ENCODE measurements at regions of chr6 and their contacts with region 1.

Region 1: DNA sequence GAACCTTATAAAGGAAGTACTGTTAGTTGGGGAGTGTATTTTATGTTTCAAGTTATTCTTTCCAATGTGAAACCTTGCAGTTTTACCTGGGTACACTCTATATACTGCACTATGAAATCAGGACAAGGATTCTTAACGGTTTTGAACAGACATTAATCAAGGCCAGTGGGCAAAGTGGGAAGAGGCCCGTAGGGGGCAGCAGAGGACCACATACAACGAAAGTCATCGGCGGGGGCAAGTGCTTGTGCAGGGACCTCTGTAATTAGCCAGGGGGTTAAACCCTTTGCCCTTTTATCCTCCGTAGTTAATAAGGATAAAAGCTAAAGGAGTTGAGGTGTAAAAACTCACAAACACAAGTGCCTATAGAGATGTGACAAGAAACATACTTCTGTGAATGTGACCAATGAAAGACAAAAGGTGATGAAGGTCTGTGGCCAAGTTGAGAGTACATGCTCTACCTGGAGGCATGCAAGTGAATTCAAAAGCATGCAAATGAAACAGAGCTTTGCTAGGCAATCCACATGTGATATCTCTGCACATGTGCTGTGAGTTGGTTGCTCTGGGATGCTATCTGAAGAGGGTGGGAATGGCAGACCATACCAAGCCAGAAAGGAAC is 392.7 kb upstream of the MAN1A1 start:
- H3K4me3 Mint-ChIP-seq: no peak overlapping the region
- H3K27ac Mint-ChIP-seq: no peak overlapping the region
- H3K4me1 Mint-ChIP-seq: no peaks in the 10 kb centered on the region
- H3K27me3 Mint-ChIP-seq: no peaks in the 10 kb centered on the region

Region 2: DNA sequence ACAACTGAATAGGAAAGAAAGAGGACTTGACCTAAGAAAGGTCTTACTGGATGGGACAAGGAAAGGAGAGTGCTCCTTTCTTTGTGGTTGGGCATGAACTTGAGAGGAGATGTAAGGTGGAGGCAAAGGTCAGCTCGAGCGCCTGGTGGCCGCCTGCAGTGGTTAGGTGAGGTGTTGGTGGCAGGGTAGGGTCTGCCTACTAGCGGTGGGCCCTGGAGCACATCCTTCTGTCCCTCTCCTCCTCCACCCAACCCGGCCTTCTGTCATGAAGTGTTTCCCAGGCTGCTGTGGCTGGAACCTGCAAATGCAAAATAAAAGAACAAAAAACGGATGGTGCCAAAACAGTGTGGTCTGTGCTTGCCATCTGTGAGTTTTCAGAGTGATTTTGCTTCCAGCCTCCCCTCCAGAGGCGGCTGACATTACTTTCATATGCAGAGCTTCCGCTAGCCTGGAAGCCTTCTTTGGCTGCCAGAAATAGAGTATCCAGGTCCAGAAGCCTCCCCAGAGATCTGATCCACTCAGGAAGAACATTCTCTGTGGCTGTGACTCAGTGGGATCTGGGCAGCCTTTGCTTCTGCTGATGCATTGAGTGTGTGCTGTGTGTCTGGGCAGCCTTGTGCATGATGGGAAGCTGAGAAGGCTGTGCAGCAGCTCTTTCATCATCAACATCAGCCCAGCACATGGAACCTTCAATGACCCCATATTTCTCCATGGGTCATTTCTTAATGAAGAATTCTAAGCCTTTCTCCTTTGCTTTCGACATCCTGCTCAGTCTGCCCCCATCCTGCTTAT is 584.0 kb before region 1 on chr6:
- intact Hi-C with region 1: loop called (anchors 10 kb)
- H3K4me3 Mint-ChIP-seq: no peak overlapping the region
- H3K27ac Mint-ChIP-seq: no peak overlapping the region
- H3K4me1 Mint-ChIP-seq: peaks cover 24% of the 10 kb centered on the region
- H3K27me3 Mint-ChIP-seq: peaks cover 2% of the 10 kb centered on the region

Region 3: GRCh38 chr6:119308048-119308570 is 434.2 kb before region 1 on chr6:
- intact Hi-C with region 1: no loop called
- H3K4me3 Mint-ChIP-seq: no peak overlapping the region
- H3K27ac Mint-ChIP-seq: no peak overlapping the region
- H3K4me1 Mint-ChIP-seq: peaks cover 29% of the 10 kb centered on the region
- H3K27me3 Mint-ChIP-seq: peaks cover 2% of the 10 kb centered on the region

Region 4: GRCh38 chr6:119818876-119819275 is 76.6 kb after region 1 on chr6:
- intact Hi-C with region 1: no loop called
- H3K4me3 Mint-ChIP-seq: no peak overlapping the region
- H3K27ac Mint-ChIP-seq: no peak overlapping the region
- H3K4me1 Mint-ChIP-seq: no peaks in the 10 kb centered on the region
- H3K27me3 Mint-ChIP-seq: no peaks in the 10 kb centered on the region

Region 5: GRCh38 chr6:119978274-119978889 is 236.1 kb after region 1 on chr6:
- intact Hi-C with region 1: loop called (anchors 2 kb)
- H3K4me3 Mint-ChIP-seq: no peak overlapping the region
- H3K27ac Mint-ChIP-seq: no peak overlapping the region
- H3K4me1 Mint-ChIP-seq: no peaks in the 10 kb centered on the region
- H3K27me3 Mint-ChIP-seq: no peaks in the 10 kb centered on the region

Region 6: GRCh38 chr6:120056085-120056484 is 313.8 kb after region 1 on chr6:
- intact Hi-C with region 1: loop called (anchors 10 kb)
- H3K4me3 Mint-ChIP-seq: no peak overlapping the region
- H3K27ac Mint-ChIP-seq: no peak overlapping the region
- H3K4me1 Mint-ChIP-seq: no peaks in the 10 kb centered on the region
- H3K27me3 Mint-ChIP-seq: no peaks in the 10 kb centered on the region

Region 7: GRCh38 chr6:121305957-121306607 is 1563.8 kb after region 1 on chr6:
- intact Hi-C with region 1: loop called (anchors 5 kb)
- H3K4me3 Mint-ChIP-seq: no peak overlapping the region
- H3K27ac Mint-ChIP-seq: no peak overlapping the region
- H3K4me1 Mint-ChIP-seq: no peaks in the 10 kb centered on the region
- H3K27me3 Mint-ChIP-seq: no peaks in the 10 kb centered on the region